ENCODE measurements at regions of chr16 and their contacts with region 1.

Region 1: GRCh38 chr16:9123871-9124270 is 32.4 kb downstream of the HAPSTR1 start:
- DNase-seq: peak in 1 of 2 donors; percentile 44
- ATAC-seq: peak in 5 of 8 donors; percentile 23 to 73 (median 43)
- H3K4me3 ChIP-seq: no peak overlapping the region
- H3K27ac ChIP-seq: peak overlapping the region in 2 of 10 donors; percentile 6 to 21
- H3K4me1 ChIP-seq: peaks cover 6 to 92% (median 57%) of the 10 kb centered on the region in 9 donors
- H3K27me3 ChIP-seq: no peaks in the 10 kb centered on the region
- CTCF ChIP-seq: no peak

Region 2: DNA sequence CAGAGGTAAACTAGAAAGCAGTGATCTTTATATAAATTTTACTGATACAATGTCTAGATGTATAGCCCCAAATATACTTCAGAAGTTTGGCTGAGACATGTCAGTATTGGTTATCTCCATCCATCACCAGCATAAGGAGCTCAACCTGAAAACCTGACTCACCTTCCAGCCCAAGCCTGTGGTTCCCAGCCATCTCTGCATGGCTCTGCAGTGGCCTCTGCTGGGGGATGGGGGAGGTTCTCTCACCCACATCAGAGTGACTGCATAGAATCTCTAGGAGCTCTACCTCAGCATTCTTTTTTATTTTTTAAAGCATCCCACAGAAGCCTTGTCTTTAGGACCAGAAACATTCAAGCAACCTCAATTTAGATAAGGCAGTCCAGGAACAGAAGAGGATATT is 187.4 kb before region 1 on chr16:
- intact Hi-C with region 1: loop called in 1 of 10 experiments (anchors 10 kb)
- DNase-seq: no peak
- ATAC-seq: peak in 5 of 8 donors; percentile 26 to 64 (median 52)
- H3K4me3 ChIP-seq: no peak overlapping the region
- H3K27ac ChIP-seq: no peak overlapping the region
- H3K4me1 ChIP-seq: peaks cover 7 to 83% (median 67%) of the 10 kb centered on the region in 9 donors
- H3K27me3 ChIP-seq: no peaks in the 10 kb centered on the region
- CTCF ChIP-seq: peak in 7 of 9 donors; percentile 29 to 56 (median 47)

Measured in heart right ventricle (tissue), 16 donors.